Activated CD4-positive, alpha-beta T cell treated with anti-CD3 and anti-CD28 coated beads, Interleukin-2, amount 10 ng/mL, durations not matched to agents 7 days and 5 days (primary cell): ENCODE measurements at regions of chr2 and their contacts with region 1.

Region 1: DNA sequence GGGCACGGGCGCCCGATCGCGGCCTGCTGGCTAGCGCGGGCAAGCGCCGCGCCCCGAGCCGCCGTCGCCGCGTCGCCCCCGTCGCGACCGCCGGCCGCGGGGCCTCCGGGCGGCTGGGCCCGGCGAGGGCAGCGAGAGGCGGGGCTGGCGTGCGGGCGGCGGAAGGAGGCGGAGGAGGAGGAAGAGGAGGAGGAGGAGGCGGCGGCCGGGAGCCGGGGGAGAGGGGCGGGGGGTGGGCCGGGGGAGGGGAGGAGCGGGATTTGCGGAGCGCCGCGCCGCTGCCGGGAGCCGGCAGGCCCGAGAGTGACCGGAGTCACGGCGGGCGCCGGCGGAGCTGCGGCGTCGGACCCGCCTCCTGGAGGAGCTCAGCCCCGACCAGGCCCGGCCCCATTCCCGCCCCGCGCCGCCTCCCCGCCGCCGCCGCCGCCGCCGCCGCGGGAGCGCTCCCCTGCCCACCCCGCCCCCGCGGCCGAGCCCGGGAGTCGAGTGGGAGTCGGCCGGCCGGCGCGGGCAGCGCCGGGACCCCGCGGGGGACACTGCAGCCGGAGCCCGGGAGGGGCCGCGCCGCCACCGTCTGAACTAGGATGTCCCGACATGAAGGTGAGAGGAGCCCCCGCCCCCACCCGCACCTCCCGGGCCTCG is at the start of gene KCMF1:
- DNase-seq: peak; percentile 70
- H3K4me3 Mint-ChIP-seq: peak within 1 kb of the TSS; percentile 100
- H3K27ac Mint-ChIP-seq: peak within 1 kb of the TSS; percentile 100
- H3K4me1 Mint-ChIP-seq: peaks cover 51% of the 10 kb centered on the region
- H3K27me3 Mint-ChIP-seq: no peaks in the 10 kb centered on the region
- total RNA-seq, gene KCMF1: 74.7 to 75.7 TPM

Region 2: DNA sequence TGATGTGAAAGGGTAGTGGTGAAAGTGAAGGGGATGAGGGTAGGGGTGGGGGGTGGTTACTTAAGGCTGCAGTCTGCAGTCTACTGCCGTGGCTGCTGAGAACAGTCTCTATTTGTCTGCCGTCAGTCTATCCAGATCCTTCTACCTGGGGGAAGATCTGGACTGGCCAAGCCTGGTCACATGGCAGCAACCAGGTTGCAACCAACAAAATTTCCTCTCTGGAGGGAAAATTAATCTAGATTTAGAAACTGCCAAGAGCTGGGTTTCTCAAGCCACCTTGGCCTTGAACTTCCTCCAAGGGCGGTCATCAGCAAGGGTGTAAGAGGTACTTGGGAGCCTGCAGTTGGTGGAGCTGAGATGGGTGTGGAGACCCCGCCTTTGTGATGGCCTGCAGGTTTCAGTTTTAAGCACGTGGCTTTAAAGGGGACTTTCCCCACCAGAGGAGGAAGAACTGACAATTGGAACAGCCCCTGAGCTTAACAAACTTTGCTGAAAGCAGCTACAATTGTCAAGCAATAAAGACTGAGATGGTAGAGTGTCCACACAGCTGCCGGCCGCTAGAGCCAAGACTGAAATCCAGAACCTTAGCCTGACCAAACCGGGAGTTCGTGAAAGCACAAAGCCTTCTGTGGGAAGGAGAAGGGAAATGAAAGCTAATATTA is 31.4 kb before region 1 on chr2:
- CTCF ChIA-PET with region 1: interaction called, 29 read pairs
- POLR2A ChIA-PET with region 1: interaction called, 8 read pairs
- DNase-seq: peak; percentile 86
- H3K4me3 Mint-ChIP-seq: peak overlapping the region; percentile 59
- H3K27ac Mint-ChIP-seq: peak overlapping the region; percentile 95
- H3K4me1 Mint-ChIP-seq: peaks cover 66% of the 10 kb centered on the region
- H3K27me3 Mint-ChIP-seq: no peaks in the 10 kb centered on the region

Region 3: DNA sequence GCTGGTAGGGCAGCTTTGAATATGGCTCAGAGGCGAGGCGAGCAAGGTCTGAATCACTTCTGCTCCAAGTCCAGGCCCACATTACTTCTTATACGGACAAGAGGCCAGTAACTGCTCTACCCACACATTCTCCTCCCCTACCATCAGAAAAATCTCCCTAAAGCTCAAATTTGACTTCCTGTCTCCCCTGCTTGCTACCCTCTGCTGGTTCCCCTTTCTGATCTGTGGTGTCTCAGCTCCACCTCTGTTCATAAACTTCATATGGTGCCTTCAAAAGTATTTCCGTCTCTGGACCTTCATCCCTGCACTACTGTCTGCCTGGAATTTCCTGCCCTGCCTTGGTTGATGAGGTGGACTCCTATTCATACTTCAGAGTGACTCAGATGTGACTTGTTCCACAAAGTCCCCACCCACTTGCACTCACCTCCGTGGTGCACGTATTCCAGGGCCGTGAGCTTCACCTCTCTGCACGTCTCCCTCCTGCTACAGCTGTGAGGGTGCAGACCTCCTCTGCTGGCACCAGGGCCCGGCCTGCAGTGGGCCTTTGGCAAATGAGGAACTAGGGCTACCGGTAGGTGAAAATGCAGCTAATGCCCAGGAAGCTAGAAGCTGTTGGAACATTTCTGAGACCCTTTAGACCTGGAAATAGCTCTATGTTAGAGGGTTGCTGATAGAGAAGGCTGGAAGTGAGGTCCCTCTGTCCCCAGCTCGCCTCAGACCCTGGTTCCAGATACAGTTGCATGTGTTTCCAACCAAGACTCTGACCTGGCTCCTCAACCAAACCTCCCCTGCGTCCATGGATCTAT is 24.6 kb before region 1 on chr2:
- CTCF ChIA-PET with region 1: interaction called, 29 read pairs
- POLR2A ChIA-PET with region 1: interaction called, 6 read pairs
- DNase-seq: peak; percentile 64
- H3K4me3 Mint-ChIP-seq: peak overlapping the region; percentile 46
- H3K27ac Mint-ChIP-seq: peak overlapping the region; percentile 92
- H3K4me1 Mint-ChIP-seq: peaks cover 55% of the 10 kb centered on the region
- H3K27me3 Mint-ChIP-seq: no peaks in the 10 kb centered on the region

Region 4: GRCh38 chr2:85106507-85107215 is 135.7 kb after region 1 on chr2:
- CTCF ChIA-PET with region 1: no interaction called
- POLR2A ChIA-PET with region 1: no interaction called
- DNase-seq: no peak
- H3K4me3 Mint-ChIP-seq: no peak overlapping the region
- H3K27ac Mint-ChIP-seq: no peak overlapping the region
- H3K4me1 Mint-ChIP-seq: no peaks in the 10 kb centered on the region
- H3K27me3 Mint-ChIP-seq: peaks cover 9% of the 10 kb centered on the region